ENCODE measurements at regions of chr12 and their contacts with region 1.

Region 1: DNA sequence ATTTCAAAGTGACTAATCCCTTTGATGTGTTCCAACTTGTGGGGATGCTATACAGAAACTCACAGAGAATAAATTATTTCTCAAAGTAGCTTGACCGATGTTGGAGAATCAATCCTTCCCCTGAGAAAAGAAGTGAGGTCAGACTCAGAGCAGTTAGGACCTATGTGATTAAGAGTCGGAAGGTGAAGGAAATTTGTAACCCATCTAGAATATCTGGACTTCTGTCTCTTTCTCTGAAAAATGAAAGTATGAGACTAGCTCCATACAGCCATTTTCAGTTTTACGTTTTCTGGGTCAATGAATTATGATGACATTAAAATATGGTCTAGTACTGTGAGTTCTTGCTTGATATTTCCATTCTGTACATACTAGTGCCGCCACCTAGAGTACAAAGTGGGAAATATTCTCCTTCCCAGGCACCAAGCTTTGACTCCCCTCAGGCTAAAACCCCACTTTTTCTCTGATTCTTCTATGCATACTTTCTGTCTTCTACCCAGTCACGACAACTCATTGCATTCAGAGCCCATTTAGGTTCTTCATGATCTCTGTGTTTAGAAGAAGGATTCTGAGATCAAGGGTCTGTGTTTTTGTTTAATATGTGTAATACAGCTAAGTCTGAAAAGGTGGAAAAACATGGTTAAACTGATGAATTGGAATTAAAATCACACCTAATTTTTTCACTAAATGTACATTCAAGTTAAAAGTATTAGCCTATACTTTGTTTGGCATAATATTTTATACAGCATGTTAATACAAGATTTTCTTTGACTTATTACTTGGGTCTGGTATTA is 6.9 kb upstream of the NTS start:
- DNase-seq: no peak
- ATAC-seq: peak; percentile 92
- H3K4me3 ChIP-seq: no peak overlapping the region
- H3K27ac ChIP-seq: no peak overlapping the region
- H3K4me1 ChIP-seq: no peaks in the 10 kb centered on the region
- H3K27me3 ChIP-seq: no peaks in the 10 kb centered on the region
- CTCF ChIP-seq: peak; percentile 68 to 76 (median 69)
- EP300 ChIP-seq: no peak
- POLR2A ChIP-seq: no peak
- RAD21 ChIP-seq: peak; percentile 75

Region 2: GRCh38 chr12:85225501-85225900 is 641.7 kb before region 1 on chr12:
- CTCF ChIA-PET with region 1: no interaction called
- POLR2A ChIA-PET with region 1: no interaction called
- RAD21 ChIA-PET with region 1: no interaction called
- SMC1A ChIA-PET with region 1: no interaction called
- in situ Hi-C with region 1: no loop called
- intact Hi-C with region 1: no loop called
- DNase-seq: no peak
- ATAC-seq: no peak
- H3K4me3 ChIP-seq: no peak overlapping the region
- H3K27ac ChIP-seq: no peak overlapping the region
- H3K4me1 ChIP-seq: no peaks in the 10 kb centered on the region
- H3K27me3 ChIP-seq: no peaks in the 10 kb centered on the region
- CTCF ChIP-seq: no peak
- EP300 ChIP-seq: no peak
- POLR2A ChIP-seq: no peak
- RAD21 ChIP-seq: no peak

Region 3: GRCh38 chr12:85461127-85461526 is 406.1 kb before region 1 on chr12:
- CTCF ChIA-PET with region 1: interaction called, 44 read pairs
- POLR2A ChIA-PET with region 1: no interaction called
- RAD21 ChIA-PET with region 1: interaction called, 4 read pairs
- SMC1A ChIA-PET with region 1: interaction called, 24 read pairs
- in situ Hi-C with region 1: loop called (anchors 5 kb)
- intact Hi-C with region 1: no loop called
- DNase-seq: no peak
- ATAC-seq: no peak
- H3K4me3 ChIP-seq: no peak overlapping the region
- H3K27ac ChIP-seq: no peak overlapping the region
- H3K4me1 ChIP-seq: no peaks in the 10 kb centered on the region
- H3K27me3 ChIP-seq: no peaks in the 10 kb centered on the region
- CTCF ChIP-seq: no peak
- EP300 ChIP-seq: no peak
- POLR2A ChIP-seq: no peak
- RAD21 ChIP-seq: no peak

Region 4: DNA sequence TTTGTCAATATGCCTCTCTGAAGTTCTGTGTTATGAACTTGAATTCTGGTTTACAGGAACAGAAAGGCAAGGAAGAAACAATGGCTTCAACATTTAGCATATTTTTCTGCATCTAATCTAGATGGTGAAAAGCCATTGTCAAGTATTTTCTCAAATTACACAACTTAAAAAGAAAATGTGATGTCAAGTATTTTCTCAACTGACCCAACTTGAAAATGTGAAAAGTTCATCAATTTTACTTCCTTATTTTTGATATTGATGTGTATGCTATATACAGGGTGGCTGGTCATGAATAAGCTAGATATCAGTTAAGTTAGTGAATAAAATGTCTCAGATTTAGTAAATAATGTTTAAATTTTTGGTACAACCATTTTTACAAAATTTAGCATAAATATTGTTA is 390.4 kb before region 1 on chr12:
- CTCF ChIA-PET with region 1: interaction called, 34 read pairs
- POLR2A ChIA-PET with region 1: no interaction called
- RAD21 ChIA-PET with region 1: interaction called, 19 read pairs
- SMC1A ChIA-PET with region 1: interaction called, 22 read pairs
- in situ Hi-C with region 1: no loop called
- intact Hi-C with region 1: no loop called
- DNase-seq: no peak
- ATAC-seq: no peak
- H3K4me3 ChIP-seq: no peak overlapping the region
- H3K27ac ChIP-seq: no peak overlapping the region
- H3K4me1 ChIP-seq: no peaks in the 10 kb centered on the region
- H3K27me3 ChIP-seq: no peaks in the 10 kb centered on the region
- CTCF ChIP-seq: no peak
- EP300 ChIP-seq: no peak
- POLR2A ChIP-seq: no peak
- RAD21 ChIP-seq: no peak

Region 5: GRCh38 chr12:85575120-85576096 is 291.8 kb before region 1 on chr12:
- CTCF ChIA-PET with region 1: interaction called, 58 read pairs
- POLR2A ChIA-PET with region 1: no interaction called
- RAD21 ChIA-PET with region 1: interaction called, 27 read pairs
- SMC1A ChIA-PET with region 1: interaction called, 40 read pairs
- in situ Hi-C with region 1: loop called (anchors 5 kb)
- intact Hi-C with region 1: loop called (anchors 1 kb)
- DNase-seq: peak; percentile 13
- ATAC-seq: peak; percentile 100
- H3K4me3 ChIP-seq: no peak overlapping the region
- H3K27ac ChIP-seq: no peak overlapping the region
- H3K4me1 ChIP-seq: no peaks in the 10 kb centered on the region
- H3K27me3 ChIP-seq: no peaks in the 10 kb centered on the region
- CTCF ChIP-seq: peak; percentile 68 to 74 (median 68)
- EP300 ChIP-seq: no peak
- POLR2A ChIP-seq: no peak
- RAD21 ChIP-seq: peak; percentile 76

Region 6: DNA sequence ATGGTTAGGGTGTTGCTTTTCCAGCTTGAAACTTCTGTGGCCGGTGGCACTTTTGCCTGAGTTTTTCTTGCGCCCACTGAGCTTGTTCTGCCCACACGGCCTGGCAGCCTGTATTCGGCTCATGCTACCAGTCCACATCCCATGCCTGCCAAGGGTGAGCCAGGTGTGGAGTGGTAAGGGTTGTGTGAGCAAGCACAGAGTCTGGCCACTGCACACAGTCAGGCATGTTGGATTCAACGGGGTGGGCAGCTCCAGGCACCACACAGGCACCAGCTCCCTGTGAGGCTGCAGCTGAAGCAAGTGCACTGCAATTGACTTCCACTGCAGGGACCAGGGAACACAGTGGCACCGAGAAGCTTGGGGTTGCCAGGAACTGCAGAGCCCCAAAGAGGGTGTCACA is 11.9 kb before region 1 on chr12:
- CTCF ChIA-PET with region 1: interaction called, 23 read pairs
- POLR2A ChIA-PET with region 1: no interaction called
- RAD21 ChIA-PET with region 1: no interaction called
- SMC1A ChIA-PET with region 1: interaction called, 6 read pairs
- in situ Hi-C with region 1: no loop called
- intact Hi-C with region 1: no loop called
- DNase-seq: no peak
- ATAC-seq: no peak
- H3K4me3 ChIP-seq: no peak overlapping the region
- H3K27ac ChIP-seq: no peak overlapping the region
- H3K4me1 ChIP-seq: no peaks in the 10 kb centered on the region
- H3K27me3 ChIP-seq: no peaks in the 10 kb centered on the region
- CTCF ChIP-seq: no peak
- EP300 ChIP-seq: no peak
- POLR2A ChIP-seq: no peak
- RAD21 ChIP-seq: no peak

Region 7: DNA sequence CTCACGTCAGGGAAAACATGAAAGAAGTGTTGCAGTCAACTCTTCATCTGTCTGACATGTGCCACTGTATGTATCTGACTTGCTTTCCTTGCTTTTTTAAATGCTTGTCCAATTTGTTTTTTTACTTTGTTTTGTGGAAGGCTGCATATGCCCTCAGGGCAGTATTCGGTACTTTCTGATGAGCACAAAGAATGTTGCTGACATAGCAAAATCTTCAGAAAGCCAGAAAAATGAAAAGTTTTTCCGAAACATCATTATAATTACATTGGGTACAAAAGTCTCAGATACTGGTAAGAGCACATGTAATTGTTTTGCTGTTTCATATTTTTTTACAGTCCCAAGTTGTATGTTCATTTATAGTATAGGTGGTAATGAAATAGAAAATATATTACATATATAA is 151.2 kb after region 1 on chr12:
- CTCF ChIA-PET with region 1: no interaction called
- POLR2A ChIA-PET with region 1: no interaction called
- RAD21 ChIA-PET with region 1: no interaction called
- SMC1A ChIA-PET with region 1: no interaction called
- in situ Hi-C with region 1: no loop called
- intact Hi-C with region 1: no loop called
- DNase-seq: no peak
- ATAC-seq: no peak
- H3K4me3 ChIP-seq: no peak overlapping the region
- H3K27ac ChIP-seq: no peak overlapping the region
- H3K4me1 ChIP-seq: no peaks in the 10 kb centered on the region
- H3K27me3 ChIP-seq: no peaks in the 10 kb centered on the region
- CTCF ChIP-seq: no peak
- EP300 ChIP-seq: no peak
- POLR2A ChIP-seq: no peak
- RAD21 ChIP-seq: no peak